Ovary (tissue), 10 donors: ENCODE measurements at regions of chr18 and their contacts with region 1.

Region 1: GRCh38 chr18:23178661-23179081 is 43.4 kb downstream of the CABLES1 start:
- DNase-seq: no peak
- H3K4me3 ChIP-seq: no peak overlapping the region
- H3K27ac ChIP-seq: no peak overlapping the region
- H3K4me1 ChIP-seq: no peaks in the 10 kb centered on the region
- H3K27me3 ChIP-seq: no peaks in the 10 kb centered on the region
- CTCF ChIP-seq: no peak
- EP300 ChIP-seq: no peak
- POLR2A ChIP-seq: no peak

Region 2: DNA sequence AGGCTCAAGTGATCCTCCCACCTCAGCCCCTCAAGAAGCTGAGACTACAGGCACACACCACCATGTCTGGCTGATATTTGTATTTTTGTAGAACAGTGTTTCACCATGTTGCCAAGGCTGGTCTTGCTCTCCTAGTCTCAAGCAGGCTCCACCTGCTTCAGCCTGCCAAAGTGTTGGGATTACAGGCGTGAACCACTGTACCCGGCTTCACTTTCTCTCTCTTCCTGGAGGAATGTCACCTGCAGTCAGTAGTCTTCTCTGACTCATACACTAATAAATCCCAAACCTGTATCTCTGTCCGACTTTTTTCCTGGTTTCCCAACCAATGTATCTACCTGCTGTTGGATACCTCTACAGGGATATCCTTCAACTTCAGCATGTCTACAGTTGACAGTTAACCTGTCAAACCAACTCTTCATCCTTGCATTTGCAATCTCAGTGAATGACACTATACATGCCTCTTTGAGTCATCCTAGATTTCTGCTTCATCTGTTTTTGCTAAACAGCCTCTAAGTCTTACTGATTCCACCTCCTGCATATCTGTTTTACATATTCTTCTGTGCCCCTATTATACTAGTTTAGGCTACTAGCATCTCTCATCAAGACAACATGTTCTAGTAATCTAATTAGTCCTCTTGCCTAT is 191.0 kb before region 1 on chr18:
- intact Hi-C with region 1: no loop called
- DNase-seq: no peak
- H3K4me3 ChIP-seq: no peak overlapping the region
- H3K27ac ChIP-seq: no peak overlapping the region
- H3K4me1 ChIP-seq: no peaks in the 10 kb centered on the region
- H3K27me3 ChIP-seq: no peaks in the 10 kb centered on the region
- CTCF ChIP-seq: no peak
- EP300 ChIP-seq: no peak
- POLR2A ChIP-seq: no peak

Region 3: DNA sequence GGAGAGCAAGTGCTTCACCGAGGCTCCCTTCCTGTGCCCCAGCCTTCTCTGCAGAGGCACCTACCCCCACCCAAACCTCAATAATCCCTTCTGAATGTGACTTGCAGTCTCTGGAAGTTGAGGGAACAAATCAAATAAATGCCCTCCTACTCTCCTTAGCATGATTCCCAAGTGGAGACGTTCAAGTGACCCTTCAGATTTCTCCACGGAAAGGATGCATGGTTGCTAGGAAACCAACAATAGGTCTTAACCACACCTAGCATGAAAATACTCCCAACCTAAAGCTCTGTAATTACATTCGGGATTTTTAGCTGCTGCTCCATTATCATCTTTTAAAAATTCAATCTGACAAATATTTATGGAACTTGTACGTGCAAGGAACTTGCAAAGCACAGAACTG is 93.6 kb before region 1 on chr18:
- intact Hi-C with region 1: no loop called
- DNase-seq: no peak
- H3K4me3 ChIP-seq: no peak overlapping the region
- H3K27ac ChIP-seq: no peak overlapping the region
- H3K4me1 ChIP-seq: no peaks in the 10 kb centered on the region
- H3K27me3 ChIP-seq: no peaks in the 10 kb centered on the region
- CTCF ChIP-seq: no peak
- EP300 ChIP-seq: no peak
- POLR2A ChIP-seq: no peak

Region 4: GRCh38 chr18:23115683-23116096 is 63.0 kb before region 1 on chr18:
- intact Hi-C with region 1: loop called in 1 of 4 experiments (anchors 10 kb)
- DNase-seq: no peak
- H3K4me3 ChIP-seq: no peak overlapping the region
- H3K27ac ChIP-seq: no peak overlapping the region
- H3K4me1 ChIP-seq: no peaks in the 10 kb centered on the region
- H3K27me3 ChIP-seq: no peaks in the 10 kb centered on the region
- CTCF ChIP-seq: no peak
- EP300 ChIP-seq: no peak
- POLR2A ChIP-seq: no peak

Region 5: DNA sequence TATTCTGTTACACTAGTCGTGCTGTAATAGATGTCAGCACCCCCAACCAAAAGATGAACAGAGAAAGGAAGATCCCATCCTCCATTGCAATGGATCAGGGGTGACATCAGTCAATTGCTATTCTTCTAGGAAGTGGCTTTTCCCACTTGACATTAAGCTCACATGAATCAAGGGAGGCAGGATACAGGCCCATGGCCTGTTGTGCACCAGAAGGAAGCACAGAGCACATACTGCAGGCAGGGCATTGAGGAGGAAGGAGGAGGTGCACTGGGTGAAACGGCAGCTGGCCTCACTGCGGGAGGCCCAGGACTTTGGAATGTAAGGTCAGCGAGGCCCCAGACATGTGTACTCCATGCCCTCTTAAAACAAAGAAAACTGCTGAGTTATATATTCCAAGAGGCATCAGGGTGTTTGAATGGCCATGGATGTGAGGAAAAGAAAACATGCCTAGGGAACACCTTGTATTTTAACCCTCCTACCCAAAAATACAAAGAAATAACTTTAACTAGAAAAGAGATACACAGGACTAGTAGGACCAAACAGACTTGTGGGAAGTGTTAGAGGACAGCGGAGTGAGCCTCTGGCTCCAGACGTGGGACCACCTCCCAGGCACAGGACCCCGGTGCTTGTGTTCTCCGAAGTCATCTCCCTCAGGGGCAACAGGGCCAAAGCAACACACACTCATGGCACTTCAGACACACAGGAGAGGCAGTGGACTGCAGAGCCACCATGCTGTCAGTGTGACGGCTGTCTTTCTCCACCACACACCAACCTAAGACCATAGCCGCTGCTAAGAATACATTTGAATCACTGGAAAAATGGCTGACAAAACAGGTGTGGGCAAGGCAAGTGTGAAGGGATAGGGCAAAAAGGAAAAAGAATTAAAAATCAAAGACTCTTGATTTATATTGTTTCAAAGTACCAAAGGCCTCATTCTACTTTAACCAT is 223.0 kb after region 1 on chr18:
- intact Hi-C with region 1: no loop called
- DNase-seq: peak in 4 of 5 donors; percentile 25 to 68 (median 28)
- H3K4me3 ChIP-seq: no peak overlapping the region
- H3K27ac ChIP-seq: no peak overlapping the region
- H3K4me1 ChIP-seq: peaks cover 8% of the 10 kb centered on the region
- H3K27me3 ChIP-seq: no peaks in the 10 kb centered on the region
- CTCF ChIP-seq: no peak
- EP300 ChIP-seq: no peak
- POLR2A ChIP-seq: no peak